ENCODE measurements at regions of chr3 and their contacts with region 1.

Region 1: DNA sequence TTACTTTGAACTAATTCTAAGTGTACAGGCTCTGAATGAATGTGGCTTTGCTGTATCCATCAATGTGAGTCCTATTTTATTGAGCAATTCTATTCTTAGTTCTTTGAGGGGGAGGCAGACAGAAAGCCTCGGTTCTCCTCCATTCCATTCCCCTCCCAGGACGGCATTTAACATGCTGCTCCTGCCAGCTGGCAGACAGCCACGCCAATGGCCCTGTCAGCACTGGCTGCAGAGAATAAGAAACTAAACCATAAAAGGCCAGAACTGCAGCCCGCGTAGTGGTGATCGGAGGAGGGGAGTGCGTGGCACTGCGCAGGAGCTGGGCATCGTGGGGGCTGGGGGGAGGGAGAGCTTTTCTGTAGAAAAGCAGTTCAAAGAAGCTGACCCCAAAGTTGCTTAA is 76.0 kb upstream of the HACD2 start:
- DNase-seq: peak; percentile 95
- ATAC-seq: peak; percentile 86

Region 2: DNA sequence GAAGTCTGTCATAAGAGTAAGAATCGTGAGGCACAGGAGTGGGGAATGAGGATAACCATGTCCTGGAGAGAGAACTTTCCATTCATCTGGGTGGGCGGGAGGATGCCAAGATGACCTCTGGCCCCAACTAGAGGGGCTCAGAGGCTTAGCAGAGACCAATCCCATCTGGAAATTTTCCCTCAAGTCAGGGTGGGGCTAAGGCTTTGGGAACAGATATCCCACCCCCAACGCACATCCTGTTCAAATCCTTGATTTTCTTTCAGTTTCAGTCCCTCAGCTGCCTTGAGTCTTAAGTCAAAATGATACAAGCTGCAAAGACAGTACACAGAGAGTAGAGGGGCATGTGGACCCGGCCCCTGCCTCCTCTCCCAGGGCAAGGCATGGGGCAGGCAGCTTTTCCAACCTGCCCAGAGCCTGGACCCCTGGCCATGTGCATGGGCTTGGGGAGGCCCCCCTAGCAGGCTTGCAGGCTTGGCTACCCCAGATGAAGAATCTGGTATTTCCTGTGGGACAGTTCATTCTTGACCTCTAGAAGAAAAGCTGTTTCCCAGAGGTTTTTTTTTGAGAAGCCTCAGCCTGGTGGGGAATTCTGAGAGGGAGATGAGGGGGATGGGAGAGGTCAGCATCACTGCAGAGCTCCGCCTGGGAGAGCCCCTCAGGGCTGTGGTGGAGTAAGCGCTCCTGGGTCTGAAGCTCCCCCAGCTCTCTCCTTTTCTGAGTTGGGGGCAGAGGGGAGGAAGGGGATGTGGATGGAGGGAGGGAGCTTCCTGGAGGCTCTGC is 33.7 kb after region 1 on chr3:
- intact Hi-C with region 1: loop called (anchors 5 kb)
- DNase-seq: no peak
- ATAC-seq: peak; percentile 31

Measured in Right ventricle myocardium superior (tissue), 1 donor.